ENCODE measurements at regions of chr3 and their contacts with region 1.

Region 1: DNA sequence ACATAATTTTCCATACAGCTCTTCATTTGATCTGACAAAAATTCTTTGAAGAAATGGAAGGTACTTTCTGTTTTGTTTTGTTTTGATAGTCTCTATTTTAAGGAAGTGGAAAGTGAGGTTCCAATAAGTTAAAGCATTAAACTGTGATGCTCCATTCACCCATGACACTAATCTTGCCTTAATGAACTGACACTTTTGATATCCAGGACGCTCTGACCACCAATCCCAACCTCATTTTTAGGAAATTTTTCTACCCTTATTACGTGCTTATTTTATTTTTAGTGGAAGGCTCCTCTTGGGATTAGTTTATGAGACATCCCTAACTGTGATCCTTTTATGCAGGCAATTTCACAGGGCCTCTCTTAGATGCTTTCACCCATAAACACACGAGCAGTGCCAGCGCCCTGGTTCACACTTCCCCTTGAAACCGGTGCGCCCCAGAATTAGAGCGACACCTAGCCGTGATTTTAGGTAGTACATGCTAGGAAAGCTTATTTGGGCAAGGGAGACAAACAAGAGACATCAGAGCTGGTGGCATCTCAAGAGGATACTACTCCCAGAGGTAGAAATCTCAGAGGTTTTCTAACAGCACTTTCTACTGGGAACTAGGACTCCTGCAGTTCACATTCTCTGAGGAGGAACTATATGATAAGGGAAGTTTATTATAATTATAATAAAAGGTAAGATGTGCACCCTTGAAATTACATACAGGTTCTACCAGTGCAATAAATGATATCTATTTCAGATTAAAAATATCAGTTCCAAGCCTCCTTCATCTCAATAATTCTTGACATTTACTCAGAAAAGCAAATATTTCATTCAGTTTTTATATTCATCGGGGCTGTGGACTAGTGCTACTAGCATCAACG is 173.9 kb downstream of the SLC9A9 start:
- DNase-seq: peak; percentile 94
- ATAC-seq: peak; percentile 90
- H3K4me3 ChIP-seq: peak overlapping the region in 3 of 5 experiments; percentile 8 to 57 (median 20)
- H3K4me3 Mint-ChIP-seq: peak overlapping the region; percentile 75
- H3K27ac ChIP-seq: peak overlapping the region; percentile 69 to 77
- H3K27ac Mint-ChIP-seq: peak overlapping the region; percentile 94
- H3K4me1 ChIP-seq: peaks cover 23 to 30% of the 10 kb centered on the region in 2 donors
- H3K4me1 Mint-ChIP-seq: peaks cover 45% of the 10 kb centered on the region
- H3K27me3 ChIP-seq: no peaks in the 10 kb centered on the region
- H3K27me3 Mint-ChIP-seq: no peaks in the 10 kb centered on the region
- CTCF ChIP-seq: peak; percentile 97

Region 2: DNA sequence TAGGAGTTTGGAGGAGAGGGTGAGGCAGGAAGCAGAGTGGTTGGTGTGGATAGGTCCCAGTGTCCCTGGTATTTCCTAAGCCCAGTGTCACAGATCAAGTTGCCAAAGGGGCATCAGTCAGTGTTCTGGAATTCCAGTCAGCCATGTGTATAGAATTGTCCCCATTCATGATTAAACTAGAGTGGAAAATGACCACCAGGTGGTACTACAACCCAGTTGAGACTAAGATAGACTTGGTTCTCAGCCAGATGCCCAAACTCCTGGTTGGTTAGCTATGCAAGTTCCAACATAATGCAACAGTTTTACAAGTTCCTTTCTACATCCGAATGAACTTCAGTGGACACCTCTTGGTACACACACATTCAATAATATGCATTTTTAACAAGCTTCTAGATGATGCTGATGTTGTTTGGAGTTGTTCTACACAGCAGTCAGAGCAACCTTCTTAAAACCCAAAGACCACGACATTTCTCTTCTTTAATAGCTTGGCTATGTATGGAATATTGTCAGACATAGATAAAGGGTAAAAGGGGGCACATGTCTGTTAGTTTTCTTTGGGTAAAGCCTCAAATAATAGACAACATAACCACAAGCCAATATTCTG is 1087.4 kb before region 1 on chr3:
- CTCF ChIA-PET with region 1: interaction called, 5 read pairs
- POLR2A ChIA-PET with region 1: no interaction called
- intact Hi-C with region 1: loop called (anchors 10 kb)
- DNase-seq: peak; percentile 53
- ATAC-seq: peak; percentile 64
- H3K4me3 ChIP-seq: no peak overlapping the region
- H3K4me3 Mint-ChIP-seq: no peak overlapping the region
- H3K27ac ChIP-seq: no peak overlapping the region
- H3K27ac Mint-ChIP-seq: no peak overlapping the region
- H3K4me1 ChIP-seq: no peaks in the 10 kb centered on the region
- H3K4me1 Mint-ChIP-seq: no peaks in the 10 kb centered on the region
- H3K27me3 ChIP-seq: peaks cover 0 to 6% (median 0%) of the 10 kb centered on the region in 4 experiments
- H3K27me3 Mint-ChIP-seq: peaks cover 27% of the 10 kb centered on the region
- CTCF ChIP-seq: peak; percentile 57

Region 3: DNA sequence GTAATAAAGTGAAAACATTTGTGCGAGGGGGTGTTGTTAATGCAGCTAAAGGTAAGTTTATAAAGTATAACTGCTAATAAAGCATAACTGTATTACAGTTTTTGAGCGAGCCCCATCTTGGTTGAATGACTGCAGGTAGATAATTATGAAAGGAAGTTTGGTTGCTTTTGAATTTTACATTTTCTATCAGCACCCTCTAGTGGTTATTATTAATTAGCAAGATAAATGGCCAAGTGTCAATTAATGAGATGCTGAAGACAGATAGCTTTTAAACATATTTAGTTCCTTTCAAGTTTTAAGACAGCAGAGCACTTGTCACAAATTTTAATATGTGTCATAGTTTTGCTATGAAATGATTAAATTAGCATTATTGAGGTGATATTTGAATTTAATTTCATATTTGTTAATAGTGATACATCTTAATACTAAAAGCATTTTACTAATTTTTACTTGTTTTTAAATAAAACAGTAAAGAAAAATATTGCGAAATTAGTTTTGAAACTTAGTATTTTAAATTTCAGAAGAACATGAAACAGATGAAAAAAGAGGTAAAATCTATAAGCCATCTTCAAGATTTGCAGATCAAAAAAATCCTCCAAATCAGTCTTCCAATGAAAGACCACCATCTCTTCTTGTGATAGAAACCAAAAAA is 657.9 kb before region 1 on chr3:
- CTCF ChIA-PET with region 1: no interaction called
- POLR2A ChIA-PET with region 1: no interaction called
- intact Hi-C with region 1: loop called (anchors 1 kb)
- DNase-seq: peak; percentile 46
- ATAC-seq: peak; percentile 36
- H3K4me3 ChIP-seq: no peak overlapping the region
- H3K4me3 Mint-ChIP-seq: no peak overlapping the region
- H3K27ac ChIP-seq: no peak overlapping the region
- H3K27ac Mint-ChIP-seq: no peak overlapping the region
- H3K4me1 ChIP-seq: no peaks in the 10 kb centered on the region
- H3K4me1 Mint-ChIP-seq: peaks cover 5% of the 10 kb centered on the region
- H3K27me3 ChIP-seq: no peaks in the 10 kb centered on the region
- H3K27me3 Mint-ChIP-seq: no peaks in the 10 kb centered on the region
- CTCF ChIP-seq: peak; percentile 83

Region 4: DNA sequence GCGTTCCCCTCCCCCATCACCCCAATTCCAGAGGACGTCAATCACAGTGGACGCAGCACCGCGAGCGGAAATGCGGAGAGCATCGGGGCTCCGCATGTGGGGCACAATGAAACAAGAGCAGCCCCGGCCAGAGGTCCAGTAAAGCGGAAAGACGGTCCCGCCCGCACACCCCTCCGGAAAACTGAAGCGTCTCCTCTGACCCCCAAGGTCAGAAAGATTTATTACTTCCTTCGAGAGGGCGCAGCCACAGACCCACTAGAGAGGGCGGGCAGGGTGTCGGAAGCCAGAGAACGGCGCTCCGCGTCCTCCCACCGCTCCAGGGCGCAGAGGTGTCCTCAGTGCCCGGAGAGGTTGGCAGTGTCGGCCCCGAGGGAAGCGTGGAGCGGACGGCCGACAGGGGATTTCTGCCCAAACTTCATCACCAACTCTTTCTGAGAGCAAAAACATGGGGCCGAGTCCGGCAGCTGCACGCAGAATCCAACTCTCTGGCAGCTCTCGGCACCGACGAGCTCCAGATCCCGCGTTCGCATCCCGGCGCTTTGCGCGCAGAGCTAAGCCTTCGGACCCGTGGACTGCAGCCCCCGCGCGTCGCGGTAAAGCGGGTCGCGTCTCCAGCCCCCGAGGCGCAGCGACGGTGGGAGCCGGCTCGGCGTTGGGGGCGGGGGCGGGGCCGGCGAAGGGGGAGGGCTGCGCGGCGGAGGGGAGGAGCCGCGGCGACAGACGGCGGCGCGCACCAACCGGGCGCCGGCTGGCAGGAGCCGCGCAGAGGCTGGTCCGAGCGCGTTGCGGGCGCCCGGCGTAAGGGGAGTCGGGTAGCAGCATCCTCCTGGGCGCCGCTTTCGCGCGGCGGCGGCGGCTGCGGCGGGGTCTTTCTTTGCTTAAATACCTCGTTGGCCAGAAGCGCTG is 555.1 kb before region 1 on chr3 and contains the start of gene CHST2:
- CTCF ChIA-PET with region 1: interaction called, 31 read pairs
- POLR2A ChIA-PET with region 1: no interaction called
- intact Hi-C with region 1: loop called (anchors 1 kb)
- DNase-seq: peak; percentile 87
- ATAC-seq: peak; percentile 88
- H3K4me3 ChIP-seq: peak within 1 kb of the TSS; percentile 75 to 95 (median 91)
- H3K4me3 Mint-ChIP-seq: peak within 1 kb of the TSS; percentile 94
- H3K27ac ChIP-seq: peak within 1 kb of the TSS; percentile 63 to 72
- H3K27ac Mint-ChIP-seq: peak within 1 kb of the TSS; percentile 95
- H3K4me1 ChIP-seq: peaks cover 25 to 32% of the 10 kb centered on the region in 2 donors
- H3K4me1 Mint-ChIP-seq: peaks cover 31% of the 10 kb centered on the region
- H3K27me3 ChIP-seq: peaks cover 0 to 3% (median 0%) of the 10 kb centered on the region in 4 experiments
- H3K27me3 Mint-ChIP-seq: no peaks in the 10 kb centered on the region
- CTCF ChIP-seq: no peak
- total RNA-seq, gene CHST2: 24.8 and 25.0 TPM in 2 replicates

Region 5: DNA sequence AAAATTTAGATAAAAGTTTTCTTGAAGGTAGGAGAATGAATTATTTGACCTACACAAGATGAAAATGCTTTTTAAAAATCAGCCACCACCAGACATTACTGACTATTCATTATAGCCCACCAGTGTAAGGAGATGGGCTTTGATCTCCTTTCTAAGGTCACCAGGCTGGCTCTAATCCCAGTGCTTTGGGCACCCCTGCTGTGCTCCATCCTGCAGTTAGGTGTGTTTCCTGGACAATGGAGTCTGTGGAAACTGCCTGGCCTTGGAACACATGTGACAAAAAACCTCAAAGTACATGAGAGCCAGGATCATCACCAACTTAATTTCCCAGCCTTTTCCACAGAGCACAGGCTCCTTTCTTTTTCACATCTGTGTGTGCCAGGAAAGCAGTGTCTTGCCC is 293.9 kb before region 1 on chr3:
- CTCF ChIA-PET with region 1: no interaction called
- POLR2A ChIA-PET with region 1: no interaction called
- intact Hi-C with region 1: no loop called
- DNase-seq: no peak
- ATAC-seq: no peak
- H3K4me3 ChIP-seq: no peak overlapping the region
- H3K4me3 Mint-ChIP-seq: no peak overlapping the region
- H3K27ac ChIP-seq: no peak overlapping the region
- H3K27ac Mint-ChIP-seq: no peak overlapping the region
- H3K4me1 ChIP-seq: no peaks in the 10 kb centered on the region
- H3K4me1 Mint-ChIP-seq: no peaks in the 10 kb centered on the region
- H3K27me3 ChIP-seq: no peaks in the 10 kb centered on the region
- H3K27me3 Mint-ChIP-seq: no peaks in the 10 kb centered on the region
- CTCF ChIP-seq: no peak

Region 6: GRCh38 chr3:143433787-143434378 is 240.5 kb before region 1 on chr3:
- CTCF ChIA-PET with region 1: interaction called, 19 read pairs
- POLR2A ChIA-PET with region 1: no interaction called
- intact Hi-C with region 1: loop called (anchors 2 kb)
- DNase-seq: peak; percentile 34
- ATAC-seq: no peak
- H3K4me3 ChIP-seq: no peak overlapping the region
- H3K4me3 Mint-ChIP-seq: no peak overlapping the region
- H3K27ac ChIP-seq: no peak overlapping the region
- H3K27ac Mint-ChIP-seq: no peak overlapping the region
- H3K4me1 ChIP-seq: peaks cover 17% of the 10 kb centered on the region in 2 donors
- H3K4me1 Mint-ChIP-seq: peaks cover 25% of the 10 kb centered on the region
- H3K27me3 ChIP-seq: no peaks in the 10 kb centered on the region
- H3K27me3 Mint-ChIP-seq: no peaks in the 10 kb centered on the region
- CTCF ChIP-seq: peak; percentile 58

Region 7: DNA sequence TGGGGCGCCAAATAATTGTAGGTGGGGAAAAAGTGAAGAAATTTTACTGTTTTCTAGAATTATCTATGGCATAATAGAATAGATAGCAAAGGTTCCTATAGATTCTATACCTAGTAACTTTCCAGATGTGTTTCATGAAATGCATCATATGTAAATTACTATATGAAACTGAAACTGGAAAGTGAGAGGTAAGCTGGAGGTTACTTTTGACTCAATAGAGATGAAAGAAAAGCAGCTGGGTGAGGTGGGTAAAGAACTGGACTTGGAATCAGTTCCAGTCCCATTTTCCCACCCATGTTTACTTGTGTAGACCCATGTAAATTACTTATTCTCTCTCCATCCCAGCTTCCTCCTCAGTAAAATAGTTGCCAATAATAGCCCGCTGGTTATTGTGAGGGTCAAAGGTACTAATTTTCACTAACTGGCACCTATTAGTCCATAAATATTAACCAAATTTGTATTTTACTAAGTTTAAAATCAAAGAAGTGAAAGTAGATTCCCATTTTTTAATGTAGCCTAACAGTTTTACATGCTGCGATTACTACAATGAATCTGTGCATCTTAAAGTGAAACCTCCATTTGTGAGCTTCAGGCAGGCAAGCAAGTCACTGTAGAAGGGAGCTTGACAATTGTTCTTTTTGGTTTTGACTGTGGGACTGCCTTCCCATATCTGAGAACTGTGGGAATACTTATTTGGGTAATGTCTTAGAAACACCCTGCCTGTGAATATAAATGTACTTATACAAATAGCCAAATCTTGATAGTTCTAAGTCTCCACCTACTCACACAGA is 138.1 kb before region 1 on chr3:
- CTCF ChIA-PET with region 1: interaction called, 8 read pairs
- POLR2A ChIA-PET with region 1: interaction called, 3 read pairs
- intact Hi-C with region 1: loop called (anchors 1 kb)
- DNase-seq: peak; percentile 54
- ATAC-seq: peak; percentile 56
- H3K4me3 ChIP-seq: peak overlapping the region in 3 of 5 experiments; percentile 34 to 44 (median 43)
- H3K4me3 Mint-ChIP-seq: peak overlapping the region; percentile 81
- H3K27ac ChIP-seq: peak overlapping the region; percentile 71 to 75
- H3K27ac Mint-ChIP-seq: peak overlapping the region; percentile 75
- H3K4me1 ChIP-seq: peaks cover 19 to 26% of the 10 kb centered on the region in 2 donors
- H3K4me1 Mint-ChIP-seq: peaks cover 59% of the 10 kb centered on the region
- H3K27me3 ChIP-seq: no peaks in the 10 kb centered on the region
- H3K27me3 Mint-ChIP-seq: no peaks in the 10 kb centered on the region
- CTCF ChIP-seq: no peak

Region 8: DNA sequence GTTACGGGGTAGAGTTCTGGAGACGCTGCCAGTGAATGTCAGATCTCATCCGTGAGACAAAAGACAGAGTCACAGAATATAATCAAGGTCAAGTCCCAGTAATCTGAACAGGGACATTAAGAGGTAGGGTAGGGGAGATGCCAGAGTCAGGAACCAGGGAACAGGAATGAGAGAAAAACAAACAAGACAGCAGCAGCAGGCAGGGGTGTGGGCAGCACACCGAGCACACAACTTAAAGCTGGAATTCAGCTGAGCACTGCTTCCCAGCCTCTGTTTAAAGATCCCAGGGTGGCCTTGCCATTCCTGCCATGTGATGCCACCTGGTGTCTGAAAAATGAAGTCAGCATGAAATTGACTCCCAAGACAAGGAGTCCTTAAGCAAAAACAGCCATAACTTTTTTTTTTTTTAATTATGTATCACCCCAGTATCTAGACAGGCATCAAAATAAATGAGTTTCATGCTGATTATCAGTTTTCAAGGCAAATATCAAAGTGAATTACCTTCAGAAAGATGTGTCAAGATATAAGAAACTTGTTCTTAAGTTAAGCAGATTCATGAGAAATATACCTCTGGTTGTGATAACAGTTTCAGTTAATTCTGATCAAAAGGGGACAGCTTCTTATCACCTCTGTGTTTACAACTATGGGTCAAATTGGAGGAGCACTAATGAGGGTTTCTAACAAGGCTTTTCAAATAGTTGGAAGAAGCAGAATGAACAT is 29.8 kb before region 1 on chr3:
- CTCF ChIA-PET with region 1: interaction called, 20 read pairs
- POLR2A ChIA-PET with region 1: no interaction called
- intact Hi-C with region 1: loop called (anchors 2 kb)
- DNase-seq: peak; percentile 67
- ATAC-seq: peak; percentile 51
- H3K4me3 ChIP-seq: no peak overlapping the region
- H3K4me3 Mint-ChIP-seq: no peak overlapping the region
- H3K27ac ChIP-seq: no peak overlapping the region
- H3K27ac Mint-ChIP-seq: peak overlapping the region; percentile 17
- H3K4me1 ChIP-seq: peaks cover 9 to 10% of the 10 kb centered on the region in 2 donors
- H3K4me1 Mint-ChIP-seq: peaks cover 13% of the 10 kb centered on the region
- H3K27me3 ChIP-seq: no peaks in the 10 kb centered on the region
- H3K27me3 Mint-ChIP-seq: no peaks in the 10 kb centered on the region
- CTCF ChIP-seq: peak; percentile 70

Region 9: DNA sequence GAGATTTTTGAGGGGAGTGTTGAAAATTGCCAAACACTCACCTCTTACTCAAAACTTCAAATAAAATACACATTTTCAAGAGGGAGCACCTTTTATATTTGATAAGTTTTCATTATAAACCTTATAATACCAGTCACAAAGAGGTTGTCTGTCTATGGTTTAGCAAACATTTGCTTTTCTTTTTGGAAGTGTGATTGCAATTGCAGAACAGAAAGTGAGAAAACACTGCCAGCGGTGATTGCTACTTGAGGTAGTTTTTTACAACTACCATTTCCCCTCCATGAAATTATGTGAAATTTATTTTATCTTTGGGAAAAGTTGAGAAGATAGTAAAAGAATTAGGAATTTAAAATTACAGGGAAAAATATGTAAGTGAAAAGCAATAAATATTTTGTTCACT is 317.4 kb after region 1 on chr3:
- CTCF ChIA-PET with region 1: no interaction called
- POLR2A ChIA-PET with region 1: no interaction called
- intact Hi-C with region 1: no loop called
- DNase-seq: no peak
- ATAC-seq: no peak
- H3K4me3 ChIP-seq: no peak overlapping the region
- H3K4me3 Mint-ChIP-seq: no peak overlapping the region
- H3K27ac ChIP-seq: no peak overlapping the region
- H3K27ac Mint-ChIP-seq: no peak overlapping the region
- H3K4me1 ChIP-seq: no peaks in the 10 kb centered on the region
- H3K4me1 Mint-ChIP-seq: peaks cover 31% of the 10 kb centered on the region
- H3K27me3 ChIP-seq: no peaks in the 10 kb centered on the region
- H3K27me3 Mint-ChIP-seq: no peaks in the 10 kb centered on the region
- CTCF ChIP-seq: no peak